ENCODE measurements at regions of chr1 and their contacts with region 1.

Region 1: DNA sequence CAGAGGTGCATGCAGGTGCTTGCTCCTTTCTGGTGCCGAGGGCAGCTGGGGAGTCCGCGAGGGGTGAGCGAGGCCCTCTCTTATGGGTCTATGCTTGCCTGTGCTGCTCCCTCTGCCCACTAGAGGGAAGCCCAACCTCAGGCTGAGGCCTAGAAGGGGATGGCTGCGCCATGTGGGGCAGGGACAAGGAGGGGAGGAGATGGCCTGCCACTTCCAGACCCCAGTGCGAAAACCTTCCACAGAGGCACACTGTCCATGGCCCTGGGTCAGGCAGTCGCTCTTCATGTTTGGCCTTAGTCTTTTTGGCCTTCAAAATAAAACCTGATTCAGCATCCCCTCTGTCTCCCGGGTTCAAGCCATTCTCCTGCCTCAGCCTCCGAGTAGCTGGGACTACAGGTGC is 14.0 kb downstream of the RHBG start:
- DNase-seq: peak; percentile 63
- H3K4me3 Mint-ChIP-seq: no peak overlapping the region
- H3K27ac Mint-ChIP-seq: no peak overlapping the region
- H3K4me1 Mint-ChIP-seq: peaks cover 4% of the 10 kb centered on the region
- H3K27me3 Mint-ChIP-seq: peaks cover 16% of the 10 kb centered on the region

Region 2: DNA sequence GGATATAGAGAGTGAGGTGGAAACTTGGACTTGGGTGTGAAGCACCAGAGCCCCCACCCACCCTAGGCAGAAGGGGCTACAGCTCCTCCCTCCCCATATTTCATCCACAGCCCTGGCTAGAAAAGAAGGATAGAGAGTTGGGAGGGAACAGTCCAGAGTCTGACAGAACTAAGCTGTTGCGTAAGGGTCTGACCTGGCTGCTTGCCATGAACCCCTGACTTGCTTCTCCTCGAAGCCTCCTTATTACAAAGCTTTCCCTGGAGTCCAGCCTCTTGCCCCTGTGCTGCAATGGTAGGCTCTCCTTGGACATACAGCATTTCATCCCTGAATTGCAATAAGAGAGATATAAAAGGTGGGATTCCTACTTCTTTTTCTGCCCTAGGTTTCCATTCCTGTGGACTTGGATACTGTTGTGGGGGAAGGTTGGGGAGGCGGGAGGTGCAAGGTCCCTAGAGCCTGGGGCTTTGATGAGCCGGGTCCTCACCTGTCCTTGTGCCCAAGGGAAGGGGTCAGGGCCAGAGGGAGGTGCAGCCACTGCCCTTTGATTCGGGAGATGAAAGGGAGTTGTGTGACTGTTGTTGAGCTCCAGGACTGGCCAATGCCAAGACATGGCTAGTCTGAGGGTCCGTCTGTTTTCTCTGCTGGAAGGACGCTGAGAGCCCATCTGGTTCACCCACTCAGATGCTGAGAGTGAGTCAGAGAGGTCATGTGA is 11.3 kb before region 1 on chr1:
- CTCF ChIA-PET with region 1: interaction called, 29 read pairs
- POLR2A ChIA-PET with region 1: no interaction called
- DNase-seq: no peak
- H3K4me3 Mint-ChIP-seq: no peak overlapping the region
- H3K27ac Mint-ChIP-seq: no peak overlapping the region
- H3K4me1 Mint-ChIP-seq: no peaks in the 10 kb centered on the region
- H3K27me3 Mint-ChIP-seq: peaks cover 47% of the 10 kb centered on the region

Region 3: DNA sequence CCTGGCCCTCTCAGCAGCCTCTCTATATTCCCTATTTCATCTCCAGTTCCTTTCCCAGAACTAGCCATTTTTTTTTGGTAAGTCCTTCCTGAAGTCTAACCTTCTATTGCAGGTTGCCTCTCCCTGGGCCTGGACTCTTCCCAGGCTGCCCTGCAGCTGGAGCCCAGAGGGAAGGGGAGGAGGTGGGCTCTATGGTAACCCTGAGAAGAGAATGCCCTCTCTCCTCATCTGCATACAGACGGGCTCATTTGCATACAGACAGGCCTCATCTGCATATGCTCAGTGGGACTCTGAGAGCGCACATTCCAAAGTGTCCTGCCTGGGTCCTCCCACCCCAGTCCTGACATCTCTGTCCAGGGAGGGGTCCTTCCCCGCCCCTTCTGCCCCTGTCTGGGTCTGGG is 18.7 kb after region 1 on chr1:
- CTCF ChIA-PET with region 1: interaction called, 12 read pairs
- POLR2A ChIA-PET with region 1: no interaction called
- DNase-seq: no peak
- H3K4me3 Mint-ChIP-seq: no peak overlapping the region
- H3K27ac Mint-ChIP-seq: no peak overlapping the region
- H3K4me1 Mint-ChIP-seq: no peaks in the 10 kb centered on the region
- H3K27me3 Mint-ChIP-seq: peaks cover 30% of the 10 kb centered on the region

Region 4: GRCh38 chr1:156421062-156421938 is 38.3 kb after region 1 on chr1:
- CTCF ChIA-PET with region 1: interaction called, 22 read pairs
- POLR2A ChIA-PET with region 1: no interaction called
- DNase-seq: peak; percentile 58
- H3K4me3 Mint-ChIP-seq: peak overlapping the region; percentile 77
- H3K27ac Mint-ChIP-seq: no peak overlapping the region
- H3K4me1 Mint-ChIP-seq: peaks cover 16% of the 10 kb centered on the region
- H3K27me3 Mint-ChIP-seq: peaks cover 91% of the 10 kb centered on the region

Region 5: DNA sequence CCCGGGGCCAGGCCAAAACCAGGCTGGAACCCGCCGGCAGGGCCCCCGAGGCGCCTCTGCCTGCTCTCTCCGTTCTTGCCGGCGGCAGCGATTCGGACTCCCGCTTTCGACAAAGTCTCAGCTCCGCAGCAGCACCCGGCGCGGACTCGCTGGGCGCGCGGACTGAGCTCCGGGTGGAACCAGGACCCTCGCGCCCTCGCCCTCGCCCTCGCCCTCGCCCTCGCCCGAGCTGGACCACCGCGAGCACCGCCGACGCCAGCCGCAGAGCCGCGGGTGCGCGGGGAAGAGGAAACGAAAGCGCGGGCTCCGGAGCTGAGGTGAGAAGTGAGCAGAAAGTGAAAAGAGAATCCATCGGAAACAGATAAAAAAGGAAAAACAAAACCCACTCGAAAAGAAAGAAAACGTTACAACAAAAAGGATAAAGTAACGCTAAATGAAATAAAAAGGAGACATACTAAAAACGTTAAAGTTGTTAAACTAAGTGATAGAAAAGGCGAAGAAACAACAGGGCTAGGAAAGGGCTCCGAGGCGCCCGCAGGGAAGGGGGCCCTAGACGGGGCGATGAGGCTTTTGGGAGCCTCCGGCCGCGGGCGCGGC is 52.6 kb after region 1 on chr1:
- CTCF ChIA-PET with region 1: interaction called, 36 read pairs
- POLR2A ChIA-PET with region 1: no interaction called
- DNase-seq: peak; percentile 39
- H3K4me3 Mint-ChIP-seq: peak overlapping the region; percentile 77
- H3K27ac Mint-ChIP-seq: peak overlapping the region; percentile 76
- H3K4me1 Mint-ChIP-seq: peaks cover 31% of the 10 kb centered on the region
- H3K27me3 Mint-ChIP-seq: peaks cover 96% of the 10 kb centered on the region

Region 6: DNA sequence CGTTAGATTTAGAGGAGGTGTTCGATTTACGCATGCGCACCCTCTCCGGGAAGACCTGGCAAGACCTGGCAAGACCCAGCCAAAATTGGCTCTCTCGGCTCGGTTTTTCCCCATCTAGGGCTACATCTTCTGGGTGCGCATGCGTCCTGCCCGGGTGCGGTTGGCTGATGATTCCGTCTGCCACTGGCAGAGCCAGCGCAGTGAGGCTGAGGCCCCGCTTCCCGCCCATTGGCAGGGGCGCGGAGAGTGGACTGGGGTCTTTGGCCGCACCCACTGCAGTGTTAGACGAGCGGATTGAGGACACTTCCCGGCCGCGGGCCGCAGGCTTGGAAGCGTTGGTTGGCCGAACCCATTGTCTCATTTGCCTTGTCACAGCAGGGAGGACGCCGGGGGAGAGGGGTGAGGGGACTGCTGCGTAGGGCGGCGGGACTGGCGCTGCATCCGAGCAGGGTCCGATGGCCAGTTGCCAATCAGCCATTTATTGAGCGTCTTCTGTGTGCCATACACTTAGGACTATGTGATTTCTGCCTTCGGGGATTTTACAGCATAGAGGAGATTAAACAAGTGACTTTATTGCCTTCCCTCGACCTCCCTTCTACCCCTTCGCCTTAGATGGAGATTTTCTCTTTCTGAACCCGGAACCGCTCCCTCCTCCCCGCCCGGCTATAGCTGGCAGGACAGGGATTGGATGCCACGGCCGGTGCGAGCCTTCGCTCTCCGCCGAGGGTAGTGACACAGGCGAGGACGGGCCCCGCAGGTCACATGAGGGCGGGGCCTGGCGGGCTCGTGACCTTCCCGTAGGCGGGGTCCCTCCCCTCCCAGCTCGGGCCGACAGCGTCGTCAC is 73.8 kb after region 1 on chr1:
- CTCF ChIA-PET with region 1: interaction called, 19 read pairs
- POLR2A ChIA-PET with region 1: no interaction called
- DNase-seq: peak; percentile 96
- H3K4me3 Mint-ChIP-seq: peak overlapping the region; percentile 82
- H3K27ac Mint-ChIP-seq: peak overlapping the region; percentile 95
- H3K4me1 Mint-ChIP-seq: peaks cover 18% of the 10 kb centered on the region
- H3K27me3 Mint-ChIP-seq: peaks cover 6% of the 10 kb centered on the region